Pancreas (tissue), 10 donors: ENCODE measurements at regions of chr3 and their contacts with region 1.

Region 1: DNA sequence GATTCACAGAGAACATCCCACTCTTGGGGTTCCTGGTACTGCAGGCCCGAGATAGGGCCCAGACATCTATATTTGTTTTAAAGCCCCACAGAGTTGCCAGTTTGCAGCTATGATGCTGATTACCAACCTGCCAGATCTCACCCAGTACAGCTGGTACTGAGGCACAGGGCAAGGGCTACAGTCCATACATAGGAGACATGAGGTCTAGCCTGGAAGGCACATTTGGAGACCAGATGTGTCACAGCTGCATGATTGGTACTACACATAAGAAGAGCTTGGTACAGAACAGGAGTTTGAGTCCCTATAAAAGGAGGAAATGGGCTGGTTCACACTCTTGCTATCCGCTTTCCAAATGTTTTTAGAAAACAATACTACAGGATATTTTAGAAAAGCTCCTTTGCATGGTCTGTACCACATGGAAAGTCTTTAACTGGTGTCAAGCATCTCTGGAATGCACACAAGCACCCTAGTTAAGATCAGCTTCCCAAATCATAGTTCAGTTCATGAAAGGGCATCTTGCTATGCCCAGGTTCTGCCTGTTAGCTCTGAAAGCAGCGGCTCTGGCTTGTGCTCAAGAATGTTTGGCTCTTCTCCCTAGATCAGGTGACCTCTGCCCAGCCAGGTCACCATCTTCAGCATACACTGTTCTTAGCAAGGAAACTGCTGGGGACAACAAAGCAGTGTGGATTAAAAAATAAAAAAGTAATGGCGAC is 20.6 kb downstream of the MTMR14 start:
- DNase-seq: peak in 3 of 6 donors; percentile 44 to 65 (median 60)
- ATAC-seq: peak; percentile 71 to 95 (median 90)
- H3K4me3 ChIP-seq: no peak overlapping the region
- H3K27ac ChIP-seq: peak overlapping the region in 2 of 4 donors; percentile 15 to 23
- H3K4me1 ChIP-seq: peaks cover 0 to 5% (median 3%) of the 10 kb centered on the region in 3 donors
- H3K27me3 ChIP-seq: no peaks in the 10 kb centered on the region
- CTCF ChIP-seq: no peak

Region 2: GRCh38 chr3:9455596-9456131 is 214.2 kb before region 1 on chr3:
- intact Hi-C with region 1: loop called in 1 of 3 experiments (anchors 5 kb)
- DNase-seq: no peak
- ATAC-seq: no peak
- H3K4me3 ChIP-seq: no peak overlapping the region
- H3K27ac ChIP-seq: no peak overlapping the region
- H3K4me1 ChIP-seq: peaks cover 0 to 6% (median 0%) of the 10 kb centered on the region in 3 donors
- H3K27me3 ChIP-seq: no peaks in the 10 kb centered on the region
- CTCF ChIP-seq: no peak